ENCODE measurements at regions of chr6 and their contacts with region 1.

Region 1: GRCh38 chr6:13574149-13574570 is 241 bp upstream of the SIRT5 start:
- DNase-seq: peak; percentile 94 to 97 (median 96)
- H3K4me3 ChIP-seq: peak overlapping the region; percentile 70 to 86
- H3K4me3 Mint-ChIP-seq: peak overlapping the region; percentile 92 to 98 (median 96)
- H3K27ac ChIP-seq: peak overlapping the region; percentile 89
- H3K27ac Mint-ChIP-seq: peak overlapping the region; percentile 96 to 99 (median 98)
- H3K4me1 ChIP-seq: peaks cover 16% of the 10 kb centered on the region
- H3K4me1 Mint-ChIP-seq: peaks cover 13 to 40% (median 24%) of the 10 kb centered on the region in 4 donors
- H3K27me3 ChIP-seq: no peaks in the 10 kb centered on the region
- H3K27me3 Mint-ChIP-seq: peaks cover 0 to 2% of the 10 kb centered on the region in 2 donors

Region 2: DNA sequence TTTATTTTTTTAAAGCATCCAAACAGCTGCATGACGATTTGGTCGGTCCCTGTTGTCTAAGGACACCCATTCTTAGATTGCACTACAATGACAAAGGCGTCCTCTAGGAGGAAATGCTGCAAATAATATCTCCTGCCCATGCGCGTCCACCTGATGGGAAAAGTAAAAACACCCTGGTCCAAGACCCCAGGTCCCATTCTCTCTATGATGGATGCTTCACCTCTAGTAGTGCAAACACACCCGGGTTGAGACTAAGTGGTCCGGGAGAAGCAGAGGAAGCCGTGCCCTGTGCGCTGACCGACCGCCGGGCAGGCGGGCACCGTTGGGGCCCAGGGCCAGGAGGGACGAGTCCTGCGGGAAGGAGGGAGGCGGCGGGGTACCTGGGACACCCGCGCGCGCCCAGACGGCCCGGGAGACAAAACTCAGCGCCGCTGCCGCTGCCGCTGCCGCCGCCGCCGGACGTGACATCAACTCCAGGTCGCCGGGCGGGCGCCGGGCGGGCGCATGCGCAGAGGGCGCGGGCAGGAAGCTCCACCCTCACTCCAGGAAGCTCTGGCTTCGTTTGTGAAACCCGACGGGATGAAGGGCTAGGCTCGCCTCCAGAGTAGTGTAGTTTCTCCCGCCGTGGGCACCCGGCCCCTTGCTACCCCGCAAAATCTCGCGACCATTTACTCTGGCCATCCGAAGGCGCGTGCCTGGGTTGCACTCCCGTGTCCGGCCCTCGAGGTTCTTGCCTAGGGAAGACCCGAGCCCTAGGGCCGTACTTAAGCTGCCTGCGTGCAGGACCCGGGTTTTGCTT is 245.9 kb before region 1 on chr6 and contains the start of gene TBC1D7:
- CTCF ChIA-PET with region 1: interaction called, 19 read pairs
- POLR2A ChIA-PET with region 1: interaction called, 38 read pairs
- intact Hi-C with region 1: loop called (anchors 2 kb)
- DNase-seq: peak; percentile 92 to 95 (median 94)
- H3K4me3 ChIP-seq: peak within 1 kb of the TSS; percentile 89 to 91
- H3K4me3 Mint-ChIP-seq: peak within 1 kb of the TSS; percentile 94 to 98 (median 96)
- H3K27ac ChIP-seq: peak within 1 kb of the TSS; percentile 90
- H3K27ac Mint-ChIP-seq: peak within 1 kb of the TSS; percentile 96 to 99 (median 98)
- H3K4me1 ChIP-seq: peaks cover 23% of the 10 kb centered on the region
- H3K4me1 Mint-ChIP-seq: peaks cover 9 to 33% (median 22%) of the 10 kb centered on the region in 4 donors
- H3K27me3 ChIP-seq: no peaks in the 10 kb centered on the region
- H3K27me3 Mint-ChIP-seq: no peaks in the 10 kb centered on the region
- total RNA-seq, gene TBC1D7: 12.6 to 13.2 TPM

Region 3: GRCh38 chr6:13427801-13428582 is 146.2 kb before region 1 on chr6:
- CTCF ChIA-PET with region 1: interaction called, 4 read pairs
- POLR2A ChIA-PET with region 1: interaction called, 10 read pairs
- intact Hi-C with region 1: no loop called
- DNase-seq: peak; percentile 41 to 70 (median 50)
- H3K4me3 ChIP-seq: peak overlapping the region; percentile 7 to 24
- H3K4me3 Mint-ChIP-seq: peak overlapping the region; percentile 73 to 88 (median 82)
- H3K27ac ChIP-seq: no peak overlapping the region
- H3K27ac Mint-ChIP-seq: peak overlapping the region; percentile 54 to 90 (median 85)
- H3K4me1 ChIP-seq: peaks cover 45% of the 10 kb centered on the region
- H3K4me1 Mint-ChIP-seq: peaks cover 26 to 57% (median 39%) of the 10 kb centered on the region in 4 donors
- H3K27me3 ChIP-seq: no peaks in the 10 kb centered on the region
- H3K27me3 Mint-ChIP-seq: no peaks in the 10 kb centered on the region

Region 4: GRCh38 chr6:13487122-13488014 is 86.8 kb before region 1 on chr6 and contains the start of gene GFOD1:
- CTCF ChIA-PET with region 1: interaction called, 6 read pairs
- POLR2A ChIA-PET with region 1: interaction called, 17 read pairs
- intact Hi-C with region 1: loop called (anchors 1 kb)
- DNase-seq: peak; percentile 55 to 68 (median 61)
- H3K4me3 ChIP-seq: peak within 1 kb of the TSS; percentile 67 to 69
- H3K4me3 Mint-ChIP-seq: peak within 1 kb of the TSS; percentile 88 to 94 (median 92)
- H3K27ac ChIP-seq: peak within 1 kb of the TSS; percentile 4
- H3K27ac Mint-ChIP-seq: peak within 1 kb of the TSS; percentile 42 to 78 (median 73)
- H3K4me1 ChIP-seq: peaks cover 12% of the 10 kb centered on the region
- H3K4me1 Mint-ChIP-seq: peaks cover 16 to 36% (median 30%) of the 10 kb centered on the region in 4 donors
- H3K27me3 ChIP-seq: no peaks in the 10 kb centered on the region
- H3K27me3 Mint-ChIP-seq: peaks cover 5 to 6% of the 10 kb centered on the region in 2 donors
- total RNA-seq, gene GFOD1: 0.97 to 1.1 TPM

Region 5: DNA sequence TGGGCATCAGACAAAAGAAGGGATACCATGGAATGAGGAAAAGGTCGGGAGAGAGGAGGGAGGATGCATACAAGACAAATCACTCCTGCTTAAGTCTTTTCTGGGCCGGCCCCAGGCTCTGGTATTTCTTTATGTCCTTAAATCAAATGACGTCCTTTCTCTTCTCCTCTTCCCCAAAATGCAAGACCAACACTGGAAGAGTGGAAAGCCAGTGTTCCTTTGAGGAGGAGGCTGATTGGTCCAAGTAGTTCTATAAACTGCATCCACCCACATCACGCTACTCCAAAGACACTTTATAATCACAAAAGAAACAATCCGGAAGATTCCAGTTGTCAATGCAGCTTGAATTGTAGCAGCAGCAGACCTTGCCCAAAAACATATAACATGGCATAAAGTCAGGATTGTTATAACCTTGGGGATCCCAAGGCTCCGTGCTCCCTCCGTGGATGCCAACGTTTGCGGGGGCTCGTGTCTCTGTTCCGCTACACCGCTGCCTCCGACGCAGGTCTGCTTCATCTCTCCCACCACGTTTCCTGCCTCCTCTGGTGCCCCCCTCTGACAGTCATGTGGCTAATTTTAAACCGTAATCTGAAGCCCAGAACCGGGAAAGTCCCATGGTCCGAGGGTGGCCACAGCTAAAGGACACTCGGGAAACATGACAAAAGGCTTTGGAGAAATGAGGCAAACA is 193.1 kb after region 1 on chr6:
- CTCF ChIA-PET with region 1: interaction called, 7 read pairs
- POLR2A ChIA-PET with region 1: interaction called, 4 read pairs
- intact Hi-C with region 1: loop called (anchors 1 kb)
- DNase-seq: peak in 4 of 5 donors; percentile 11 to 25 (median 22)
- H3K4me3 ChIP-seq: peak overlapping the region in 1 of 2 donors; percentile 32
- H3K4me3 Mint-ChIP-seq: peak overlapping the region in 7 of 8 donors; percentile 65 to 80 (median 74)
- H3K27ac ChIP-seq: no peak overlapping the region
- H3K27ac Mint-ChIP-seq: peak overlapping the region in 5 of 7 donors; percentile 43 to 89 (median 61)
- H3K4me1 ChIP-seq: peaks cover 19% of the 10 kb centered on the region
- H3K4me1 Mint-ChIP-seq: peaks cover 23 to 44% (median 31%) of the 10 kb centered on the region in 4 donors
- H3K27me3 ChIP-seq: no peaks in the 10 kb centered on the region
- H3K27me3 Mint-ChIP-seq: no peaks in the 10 kb centered on the region

Region 6: GRCh38 chr6:14046476-14047068 is 472.4 kb after region 1 on chr6:
- CTCF ChIA-PET with region 1: interaction called, 3 read pairs
- POLR2A ChIA-PET with region 1: no interaction called
- intact Hi-C with region 1: loop called (anchors 2 kb)
- DNase-seq: peak; percentile 30 to 44 (median 37)
- H3K4me3 ChIP-seq: no peak overlapping the region
- H3K4me3 Mint-ChIP-seq: no peak overlapping the region
- H3K27ac ChIP-seq: no peak overlapping the region
- H3K27ac Mint-ChIP-seq: no peak overlapping the region
- H3K4me1 ChIP-seq: no peaks in the 10 kb centered on the region
- H3K4me1 Mint-ChIP-seq: peaks cover 0 to 1% (median 0%) of the 10 kb centered on the region in 4 donors
- H3K27me3 ChIP-seq: no peaks in the 10 kb centered on the region
- H3K27me3 Mint-ChIP-seq: peaks cover 19 to 26% of the 10 kb centered on the region in 2 donors